Calu3 (cell line): ENCODE measurements at regions of chr12 and their contacts with region 1.

Region 1: GRCh38 chr12:62484233-62484632 is 17.6 kb downstream of the MON2 start:
- DNase-seq: no peak
- H3K4me3 Mint-ChIP-seq: no peak overlapping the region
- H3K27ac Mint-ChIP-seq: no peak overlapping the region
- H3K4me1 Mint-ChIP-seq: no peaks in the 10 kb centered on the region
- H3K27me3 Mint-ChIP-seq: no peaks in the 10 kb centered on the region
- CTCF ChIP-seq: no peak

Region 2: GRCh38 chr12:62382526-62382925 is 101.7 kb before region 1 on chr12:
- CTCF ChIA-PET with region 1: interaction called, 10 read pairs
- intact Hi-C with region 1: no loop called
- DNase-seq: no peak
- H3K4me3 Mint-ChIP-seq: no peak overlapping the region
- H3K27ac Mint-ChIP-seq: no peak overlapping the region
- H3K4me1 Mint-ChIP-seq: no peaks in the 10 kb centered on the region
- H3K27me3 Mint-ChIP-seq: no peaks in the 10 kb centered on the region
- CTCF ChIP-seq: no peak